K562 (cell line): ENCODE measurements at regions of chr9 and their contacts with region 1.

Region 1: GRCh38 chr9:110623462-110624025 is 44.0 kb upstream of the SVEP1 start:
- DNase-seq: peak; percentile 16 to 59 (median 33)
- ATAC-seq: peak; percentile 69
- H3K4me3 ChIP-seq: no peak overlapping the region
- H3K27ac ChIP-seq: no peak overlapping the region
- H3K4me1 ChIP-seq: no peaks in the 10 kb centered on the region
- H3K27me3 ChIP-seq: no peaks in the 10 kb centered on the region
- CTCF ChIP-seq: peak; percentile 39 to 69 (median 59); a peak in 5 of 6 replicates
- EP300 ChIP-seq: no peak
- POLR2A ChIP-seq: no peak
- RAD21 ChIP-seq: peak; percentile 70 to 85

Region 2: GRCh38 chr9:109903515-109904138 is 719.9 kb before region 1 on chr9:
- CTCF ChIA-PET with region 1: no interaction called
- POLR2A ChIA-PET with region 1: no interaction called
- in situ Hi-C with region 1: no loop called
- intact Hi-C with region 1: loop called (anchors 10 kb)
- DNase-seq: peak; percentile 50 to 68 (median 64)
- ATAC-seq: peak; percentile 93
- H3K4me3 ChIP-seq: no peak overlapping the region
- H3K27ac ChIP-seq: no peak overlapping the region
- H3K4me1 ChIP-seq: no peaks in the 10 kb centered on the region
- H3K27me3 ChIP-seq: no peaks in the 10 kb centered on the region
- CTCF ChIP-seq: peak; percentile 65 to 80 (median 72)
- EP300 ChIP-seq: no peak
- POLR2A ChIP-seq: no peak
- RAD21 ChIP-seq: peak; percentile 54 to 76

Region 3: DNA sequence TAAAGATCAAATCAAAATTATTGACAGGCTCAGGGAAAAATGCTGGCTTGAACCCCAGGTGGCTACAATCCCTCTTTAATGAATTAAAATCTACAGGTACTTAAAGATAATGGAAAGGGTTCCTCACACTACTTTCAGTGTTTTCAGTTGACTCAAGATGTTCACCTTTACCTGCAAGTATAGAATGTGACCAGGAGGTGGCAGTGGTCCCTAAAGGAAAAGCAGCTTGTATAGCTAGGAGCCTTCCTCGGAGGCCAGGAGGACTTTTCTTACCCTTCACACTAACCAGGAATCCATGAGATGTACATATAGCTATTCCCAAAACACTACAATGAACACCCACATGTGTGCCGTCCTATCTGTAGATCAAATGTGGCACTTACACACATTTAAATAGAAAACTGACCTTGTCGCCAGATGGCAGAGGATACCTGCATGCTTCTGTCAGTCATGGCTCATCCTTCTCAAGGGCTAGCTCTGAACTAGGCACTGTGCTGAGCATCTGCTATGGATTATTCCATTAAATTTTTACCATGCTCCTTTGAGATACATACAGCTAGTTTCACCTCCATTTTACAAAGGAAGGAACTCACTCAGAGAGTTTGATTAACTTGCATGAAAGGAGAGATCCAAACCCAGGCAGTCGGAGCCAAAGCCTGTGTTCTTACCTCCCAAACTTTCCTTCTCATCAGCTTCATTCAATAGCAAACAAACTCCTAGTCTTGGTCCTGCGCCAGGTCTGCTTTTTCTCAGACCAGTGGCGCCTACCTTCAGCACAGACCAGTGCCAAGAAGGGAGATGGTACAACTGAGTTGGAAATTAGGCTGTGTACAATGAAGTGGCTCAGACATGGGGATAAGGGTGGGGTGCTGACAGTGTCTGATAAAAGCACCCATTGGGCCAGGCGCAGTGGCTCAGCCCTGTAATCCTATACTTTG is 440.1 kb before region 1 on chr9:
- CTCF ChIA-PET with region 1: interaction called, 17 read pairs
- POLR2A ChIA-PET with region 1: no interaction called
- in situ Hi-C with region 1: loop called (anchors 5 kb)
- intact Hi-C with region 1: loop called (anchors 1 kb)
- DNase-seq: peak; percentile 66 to 76 (median 66)
- ATAC-seq: peak; percentile 95
- H3K4me3 ChIP-seq: no peak overlapping the region
- H3K27ac ChIP-seq: no peak overlapping the region
- H3K4me1 ChIP-seq: no peaks in the 10 kb centered on the region
- H3K27me3 ChIP-seq: peaks cover 0 to 5% of the 10 kb centered on the region in 2 experiments; a peak in 1 of 5 replicates
- CTCF ChIP-seq: peak; percentile 65 to 80 (median 74)
- EP300 ChIP-seq: no peak
- POLR2A ChIP-seq: no peak
- RAD21 ChIP-seq: peak; percentile 89 to 94

Region 4: DNA sequence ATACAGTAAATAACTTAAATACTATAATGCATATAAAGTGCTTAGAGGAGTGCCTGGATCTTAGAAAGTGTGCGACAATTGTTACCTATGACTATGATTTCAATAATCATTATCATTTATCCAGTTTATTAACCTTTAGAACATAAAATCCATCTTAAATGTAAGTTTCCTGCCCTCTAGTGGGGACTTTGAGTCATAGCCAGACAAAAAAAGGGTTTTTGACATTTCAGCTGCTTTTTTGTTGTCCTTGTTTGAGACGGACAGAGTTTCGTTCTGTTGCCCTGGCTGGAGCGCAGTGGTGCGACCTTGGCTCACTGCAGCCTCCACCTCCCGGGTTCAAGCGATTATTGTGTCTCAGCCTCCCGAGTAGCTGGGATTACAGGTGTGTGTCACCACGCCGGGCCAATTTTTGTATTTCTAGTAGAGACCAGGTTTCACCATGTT is 405.9 kb before region 1 on chr9:
- CTCF ChIA-PET with region 1: interaction called, 3 read pairs
- POLR2A ChIA-PET with region 1: no interaction called
- in situ Hi-C with region 1: no loop called
- intact Hi-C with region 1: loop called (anchors 10 kb)
- DNase-seq: peak in 2 of 4 experiments; percentile 24 to 27
- ATAC-seq: peak; percentile 49; the same call in 2 of the 3 replicates
- H3K4me3 ChIP-seq: no peak overlapping the region
- H3K27ac ChIP-seq: no peak overlapping the region
- H3K4me1 ChIP-seq: no peaks in the 10 kb centered on the region; a peak in 1 of 5 replicates
- H3K27me3 ChIP-seq: peaks cover 3 to 18% of the 10 kb centered on the region in 2 experiments; a peak in 3 of 5 replicates
- CTCF ChIP-seq: peak; percentile 48 to 68 (median 65); a peak in 5 of 6 replicates
- EP300 ChIP-seq: no peak
- POLR2A ChIP-seq: no peak
- RAD21 ChIP-seq: peak; percentile 60 to 73

Region 5: DNA sequence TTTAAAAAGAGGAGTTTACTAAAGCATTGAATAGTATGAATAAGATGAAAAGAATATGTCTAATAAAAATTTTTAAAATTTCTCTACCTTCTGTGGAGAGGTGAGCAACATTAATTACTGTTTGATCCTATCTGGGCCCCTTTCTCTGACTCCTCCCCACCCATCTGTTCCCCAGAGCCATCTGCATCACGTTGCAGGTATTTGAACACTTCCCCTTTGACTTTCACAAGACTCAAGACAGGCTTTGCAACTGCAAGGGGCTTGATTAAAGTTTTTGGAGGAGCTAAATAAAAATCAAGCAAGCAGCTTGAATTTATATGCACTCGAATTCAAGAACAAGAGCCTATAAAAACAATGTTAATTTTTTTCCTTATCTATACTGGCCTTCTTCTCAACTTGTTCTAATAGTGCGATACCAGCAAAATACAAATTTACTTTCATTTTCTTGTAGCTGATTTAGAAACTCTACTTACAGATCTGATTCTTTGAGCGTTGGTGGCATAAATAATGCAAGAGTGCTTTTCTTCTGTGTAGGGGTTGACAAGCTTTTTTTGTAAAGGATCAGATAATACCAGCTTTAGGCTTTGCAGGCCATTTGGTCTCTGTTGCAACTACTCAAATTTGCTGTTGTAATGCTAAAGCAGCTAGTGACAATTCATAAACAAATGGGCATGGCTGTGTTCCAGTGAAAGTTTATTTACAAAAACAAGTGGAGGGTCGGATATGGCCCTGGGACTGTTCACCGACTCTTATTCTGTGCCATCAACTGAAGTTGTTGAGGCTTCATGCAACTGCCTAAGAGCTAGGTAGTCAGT is 307.1 kb before region 1 on chr9:
- CTCF ChIA-PET with region 1: no interaction called
- POLR2A ChIA-PET with region 1: no interaction called
- in situ Hi-C with region 1: no loop called
- intact Hi-C with region 1: no loop called
- DNase-seq: no peak
- ATAC-seq: no peak
- H3K4me3 ChIP-seq: no peak overlapping the region
- H3K27ac ChIP-seq: no peak overlapping the region
- H3K4me1 ChIP-seq: no peaks in the 10 kb centered on the region
- H3K27me3 ChIP-seq: peaks cover 0 to 2% of the 10 kb centered on the region in 2 experiments; a peak in 1 of 5 replicates
- CTCF ChIP-seq: no peak
- EP300 ChIP-seq: no peak
- POLR2A ChIP-seq: no peak
- RAD21 ChIP-seq: no peak

Region 6: GRCh38 chr9:110340314-110340713 is 283.2 kb before region 1 on chr9:
- CTCF ChIA-PET with region 1: no interaction called
- POLR2A ChIA-PET with region 1: no interaction called
- in situ Hi-C with region 1: no loop called
- intact Hi-C with region 1: loop called (anchors 1 kb)
- DNase-seq: peak in 2 of 4 experiments; percentile 28 to 57
- ATAC-seq: peak; percentile 95
- H3K4me3 ChIP-seq: no peak overlapping the region
- H3K27ac ChIP-seq: no peak overlapping the region
- H3K4me1 ChIP-seq: no peaks in the 10 kb centered on the region; a peak in 1 of 5 replicates
- H3K27me3 ChIP-seq: no peaks in the 10 kb centered on the region
- CTCF ChIP-seq: peak; percentile 61 to 79 (median 64)
- EP300 ChIP-seq: no peak
- POLR2A ChIP-seq: no peak
- RAD21 ChIP-seq: peak; percentile 47 to 76

Region 7: GRCh38 chr9:110427497-110428104 is 195.9 kb before region 1 on chr9:
- CTCF ChIA-PET with region 1: no interaction called
- POLR2A ChIA-PET with region 1: no interaction called
- in situ Hi-C with region 1: no loop called
- intact Hi-C with region 1: loop called (anchors 5 kb)
- DNase-seq: peak; percentile 22 to 66 (median 36)
- ATAC-seq: peak; percentile 91
- H3K4me3 ChIP-seq: no peak overlapping the region
- H3K27ac ChIP-seq: no peak overlapping the region
- H3K4me1 ChIP-seq: peaks cover 0 to 11% of the 10 kb centered on the region in 2 experiments; a peak in 2 of 5 replicates
- H3K27me3 ChIP-seq: no peaks in the 10 kb centered on the region
- CTCF ChIP-seq: peak; percentile 68 to 80 (median 72)
- EP300 ChIP-seq: no peak
- POLR2A ChIP-seq: no peak
- RAD21 ChIP-seq: peak; percentile 32 to 70